ENCODE measurements at regions of chr19 and their contacts with region 1.

Region 1: GRCh38 chr19:3821857-3822364 is 35.7 kb upstream of the MATK start:
- DNase-seq: peak; percentile 83
- H3K4me3 Mint-ChIP-seq: peak overlapping the region; percentile 19
- H3K27ac Mint-ChIP-seq: no peak overlapping the region
- H3K4me1 Mint-ChIP-seq: peaks cover 12% of the 10 kb centered on the region
- H3K27me3 Mint-ChIP-seq: no peaks in the 10 kb centered on the region

Region 2: GRCh38 chr19:3721131-3721886 is 100.6 kb before region 1 on chr19:
- intact Hi-C with region 1: loop called (anchors 5 kb)
- DNase-seq: peak; percentile 81
- H3K4me3 Mint-ChIP-seq: no peak overlapping the region
- H3K27ac Mint-ChIP-seq: no peak overlapping the region
- H3K4me1 Mint-ChIP-seq: no peaks in the 10 kb centered on the region
- H3K27me3 Mint-ChIP-seq: peaks cover 40% of the 10 kb centered on the region

Region 3: GRCh38 chr19:3783660-3784584 is 38.0 kb before region 1 on chr19:
- intact Hi-C with region 1: loop called (anchors 1 kb)
- DNase-seq: no peak
- H3K4me3 Mint-ChIP-seq: peak overlapping the region; percentile 68
- H3K27ac Mint-ChIP-seq: no peak overlapping the region
- H3K4me1 Mint-ChIP-seq: no peaks in the 10 kb centered on the region
- H3K27me3 Mint-ChIP-seq: peaks cover 7% of the 10 kb centered on the region

Region 4: GRCh38 chr19:3796358-3796757 is 25.6 kb before region 1 on chr19:
- intact Hi-C with region 1: loop called (anchors 1 kb)
- DNase-seq: no peak
- H3K4me3 Mint-ChIP-seq: no peak overlapping the region
- H3K27ac Mint-ChIP-seq: no peak overlapping the region
- H3K4me1 Mint-ChIP-seq: peaks cover 16% of the 10 kb centered on the region
- H3K27me3 Mint-ChIP-seq: peaks cover 8% of the 10 kb centered on the region

Region 5: DNA sequence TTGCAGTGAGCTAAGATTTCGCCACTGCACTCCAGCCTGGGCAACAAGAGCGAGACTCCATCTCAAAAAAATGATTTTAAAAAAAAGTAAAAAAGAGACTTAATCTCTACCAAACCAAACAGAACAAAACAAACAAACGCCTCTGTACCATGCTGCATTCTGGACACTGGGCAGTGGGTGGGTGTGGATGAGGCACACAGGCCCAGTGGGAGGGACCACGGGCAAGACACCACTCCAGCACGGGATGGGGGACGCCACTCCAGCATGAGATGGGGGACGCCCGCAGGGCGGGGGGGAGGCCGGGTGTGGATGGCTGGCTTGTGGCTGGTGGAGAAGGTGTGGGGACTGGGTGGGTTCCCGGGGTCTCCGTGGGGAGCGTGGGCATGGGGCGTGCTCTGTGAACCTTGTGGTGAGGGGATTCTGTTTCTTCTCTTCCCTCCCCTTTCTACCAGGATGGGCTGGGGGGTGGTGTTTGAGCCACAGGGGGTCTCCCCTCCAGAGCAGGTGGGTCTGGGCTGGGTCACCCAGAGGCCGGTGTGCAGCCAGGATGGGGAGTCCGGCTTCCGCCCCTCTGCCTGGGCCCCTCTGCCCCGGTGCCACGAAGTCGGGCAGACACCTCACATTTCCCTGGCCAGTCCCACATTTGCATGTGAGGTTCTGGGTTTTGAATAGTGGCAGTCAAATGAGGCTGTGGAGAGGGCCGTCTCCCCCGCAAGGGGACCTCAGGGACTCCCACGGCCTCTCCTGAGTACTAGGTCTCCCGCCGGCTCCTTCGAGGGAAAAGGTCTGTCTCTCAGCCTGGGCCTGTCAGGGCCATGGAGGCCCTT is 11.8 kb before region 1 on chr19:
- intact Hi-C with region 1: loop called (anchors 1 kb)
- DNase-seq: no peak
- H3K4me3 Mint-ChIP-seq: no peak overlapping the region
- H3K27ac Mint-ChIP-seq: no peak overlapping the region
- H3K4me1 Mint-ChIP-seq: peaks cover 38% of the 10 kb centered on the region
- H3K27me3 Mint-ChIP-seq: no peaks in the 10 kb centered on the region

Region 6: DNA sequence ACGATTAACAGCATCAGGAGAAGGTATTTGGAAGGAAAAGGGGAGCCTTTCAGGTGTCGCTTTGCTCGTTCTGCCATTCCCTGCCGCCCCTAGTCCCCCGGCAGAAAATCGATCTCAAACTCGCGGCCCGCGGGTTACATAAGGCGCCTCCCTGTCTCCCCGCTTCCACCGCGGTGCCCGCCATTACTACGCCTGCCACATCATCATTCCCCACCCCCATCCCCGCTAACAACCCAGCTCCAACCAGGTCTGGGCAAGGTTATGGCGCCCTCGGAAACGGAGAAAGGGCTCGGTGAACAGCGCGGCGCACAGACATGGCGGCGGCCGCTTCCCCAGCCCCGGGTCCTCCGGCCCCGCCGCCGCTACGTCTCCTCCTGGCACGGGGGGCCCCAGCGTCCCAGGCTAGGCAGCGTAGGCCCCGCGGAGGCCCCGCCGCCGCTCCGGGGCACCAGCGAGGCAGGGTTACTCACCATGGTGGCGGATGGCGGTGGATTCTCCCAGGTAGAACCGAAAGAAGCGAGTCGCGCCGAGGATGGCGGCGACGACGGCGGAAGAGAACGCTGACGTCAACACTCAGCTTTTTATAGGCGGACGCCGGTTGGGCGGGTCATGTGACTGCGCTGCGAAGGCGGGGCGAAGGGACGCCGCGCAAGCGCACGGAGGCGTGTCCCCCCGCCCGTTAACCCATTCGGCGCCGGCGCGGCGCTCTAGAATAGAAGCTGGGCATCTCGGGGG is 163.2 kb after region 1 on chr19 and contains the start of gene EEF2:
- intact Hi-C with region 1: no loop called
- DNase-seq: peak; percentile 87
- H3K4me3 Mint-ChIP-seq: peak within 1 kb of the TSS; percentile 93
- H3K27ac Mint-ChIP-seq: peak within 1 kb of the TSS; percentile 91
- H3K4me1 Mint-ChIP-seq: peaks cover 43% of the 10 kb centered on the region
- H3K27me3 Mint-ChIP-seq: peaks cover 2% of the 10 kb centered on the region
- total RNA-seq, gene EEF2: 2,359 TPM in 2 replicates